ENCODE measurements at regions of chr2 and their contacts with region 1.

Region 1: GRCh38 chr2:74715078-74715791 is 61.2 kb downstream of the SEMA4F start:
- DNase-seq: peak; percentile 88
- ATAC-seq: peak; percentile 87
- H3K4me3 ChIP-seq: peak overlapping the region; percentile 30 to 69 (median 55)
- H3K4me3 Mint-ChIP-seq: peak overlapping the region; percentile 86
- H3K27ac ChIP-seq: no peak overlapping the region
- H3K27ac Mint-ChIP-seq: peak overlapping the region; percentile 3
- H3K4me1 ChIP-seq: peaks cover 4 to 6% of the 10 kb centered on the region in 2 donors
- H3K4me1 Mint-ChIP-seq: peaks cover 7% of the 10 kb centered on the region
- H3K27me3 ChIP-seq: peaks cover 0 to 20% (median 18%) of the 10 kb centered on the region in 4 experiments
- H3K27me3 Mint-ChIP-seq: peaks cover 14% of the 10 kb centered on the region
- CTCF ChIP-seq: peak; percentile 97

Region 2: DNA sequence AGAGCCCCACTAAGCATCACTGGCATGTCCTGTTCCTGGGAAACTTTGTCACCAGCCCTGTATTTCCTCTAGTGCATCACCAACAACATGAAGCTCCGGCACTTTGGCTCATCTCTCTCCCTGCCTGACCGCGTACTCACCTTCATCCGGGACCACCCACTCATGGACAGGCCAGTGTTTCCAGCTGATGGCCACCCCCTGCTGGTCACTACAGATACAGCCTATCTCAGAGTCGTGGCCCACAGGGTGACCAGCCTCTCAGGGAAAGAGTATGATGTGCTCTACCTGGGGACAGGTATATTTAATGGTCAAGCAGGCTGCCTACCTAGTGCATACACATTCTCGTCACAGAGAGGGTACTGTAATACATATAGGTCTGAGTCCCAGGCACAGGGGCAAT is 40.1 kb before region 1 on chr2:
- CTCF ChIA-PET with region 1: no interaction called
- POLR2A ChIA-PET with region 1: no interaction called
- intact Hi-C with region 1: no loop called
- DNase-seq: no peak
- ATAC-seq: no peak
- H3K4me3 ChIP-seq: no peak overlapping the region
- H3K4me3 Mint-ChIP-seq: no peak overlapping the region
- H3K27ac ChIP-seq: no peak overlapping the region
- H3K27ac Mint-ChIP-seq: no peak overlapping the region
- H3K4me1 ChIP-seq: no peaks in the 10 kb centered on the region
- H3K4me1 Mint-ChIP-seq: no peaks in the 10 kb centered on the region
- H3K27me3 ChIP-seq: no peaks in the 10 kb centered on the region
- H3K27me3 Mint-ChIP-seq: no peaks in the 10 kb centered on the region
- CTCF ChIP-seq: no peak

Region 3: DNA sequence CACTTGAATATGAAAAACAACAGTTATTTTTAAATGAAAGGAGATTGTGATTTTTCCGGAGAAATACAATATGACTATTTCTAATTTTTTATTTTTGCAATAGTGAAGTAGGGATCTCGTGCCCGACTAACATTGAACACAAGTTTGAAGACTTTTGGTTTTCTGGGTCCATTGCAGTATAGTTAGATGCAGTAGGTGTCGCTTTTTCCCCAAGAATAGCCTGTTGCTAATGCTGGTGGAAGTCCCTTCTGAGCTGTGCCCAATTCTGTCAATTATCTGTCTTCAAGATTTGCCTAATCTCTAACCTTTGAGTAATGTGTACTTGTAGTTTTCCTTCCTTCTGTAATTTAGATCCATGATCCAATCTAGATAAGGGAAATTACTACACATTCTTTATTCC is 24.7 kb before region 1 on chr2:
- CTCF ChIA-PET with region 1: interaction called, 9 read pairs
- POLR2A ChIA-PET with region 1: no interaction called
- intact Hi-C with region 1: loop called (anchors 1 kb)
- DNase-seq: peak; percentile 61
- ATAC-seq: peak; percentile 49
- H3K4me3 ChIP-seq: no peak overlapping the region
- H3K4me3 Mint-ChIP-seq: no peak overlapping the region
- H3K27ac ChIP-seq: no peak overlapping the region
- H3K27ac Mint-ChIP-seq: no peak overlapping the region
- H3K4me1 ChIP-seq: no peaks in the 10 kb centered on the region
- H3K4me1 Mint-ChIP-seq: no peaks in the 10 kb centered on the region
- H3K27me3 ChIP-seq: no peaks in the 10 kb centered on the region
- H3K27me3 Mint-ChIP-seq: peaks cover 12% of the 10 kb centered on the region
- CTCF ChIP-seq: peak; percentile 74

Region 4: DNA sequence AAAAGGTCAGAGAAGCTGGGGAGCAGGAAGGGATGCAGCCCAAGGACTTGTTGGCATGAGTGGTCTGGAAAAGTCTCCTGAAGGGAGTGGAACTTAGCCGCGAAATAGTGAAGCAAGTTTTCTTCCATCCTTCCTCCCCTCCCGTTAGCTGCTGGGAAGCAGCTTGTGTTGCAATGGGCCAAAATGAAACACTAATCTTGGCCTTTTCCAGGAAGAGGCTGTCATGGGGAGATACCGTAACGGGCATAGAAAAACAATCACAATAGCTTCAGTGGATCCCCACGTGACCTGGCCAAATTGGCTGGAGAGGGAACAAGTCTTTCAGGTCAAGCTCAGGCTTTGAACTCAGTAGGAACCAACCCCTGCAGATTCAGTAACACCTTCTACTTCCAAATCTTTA is 11.9 kb before region 1 on chr2:
- CTCF ChIA-PET with region 1: interaction called, 13 read pairs
- POLR2A ChIA-PET with region 1: no interaction called
- intact Hi-C with region 1: no loop called
- DNase-seq: no peak
- ATAC-seq: no peak
- H3K4me3 ChIP-seq: no peak overlapping the region
- H3K4me3 Mint-ChIP-seq: no peak overlapping the region
- H3K27ac ChIP-seq: no peak overlapping the region
- H3K27ac Mint-ChIP-seq: no peak overlapping the region
- H3K4me1 ChIP-seq: peaks cover 0 to 5% of the 10 kb centered on the region in 2 donors
- H3K4me1 Mint-ChIP-seq: peaks cover 8% of the 10 kb centered on the region
- H3K27me3 ChIP-seq: no peaks in the 10 kb centered on the region
- H3K27me3 Mint-ChIP-seq: peaks cover 15% of the 10 kb centered on the region
- CTCF ChIP-seq: no peak

Region 5: DNA sequence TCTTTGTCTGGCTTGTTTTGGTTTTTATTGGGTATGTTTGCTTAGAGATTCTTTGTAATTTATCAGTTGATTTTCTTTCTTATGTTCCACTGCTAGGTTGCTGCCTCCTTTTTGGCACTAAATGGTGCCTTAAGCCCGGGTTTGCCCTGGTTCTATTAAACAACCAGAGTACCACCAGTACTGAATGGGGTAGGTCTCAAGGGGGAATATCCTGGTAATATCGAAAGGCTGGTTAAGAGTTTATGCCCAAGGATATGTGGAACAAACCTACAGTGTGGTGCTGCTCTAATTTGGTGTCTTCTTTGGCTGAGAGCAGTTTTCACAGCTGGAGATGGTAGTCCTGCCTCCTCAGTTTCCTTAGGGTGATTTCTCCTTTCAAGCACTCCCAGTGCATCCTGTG is 15.3 kb after region 1 on chr2:
- CTCF ChIA-PET with region 1: interaction called, 10 read pairs
- POLR2A ChIA-PET with region 1: no interaction called
- intact Hi-C with region 1: no loop called
- DNase-seq: no peak
- ATAC-seq: no peak
- H3K4me3 ChIP-seq: no peak overlapping the region
- H3K4me3 Mint-ChIP-seq: no peak overlapping the region
- H3K27ac ChIP-seq: no peak overlapping the region
- H3K27ac Mint-ChIP-seq: no peak overlapping the region
- H3K4me1 ChIP-seq: no peaks in the 10 kb centered on the region
- H3K4me1 Mint-ChIP-seq: no peaks in the 10 kb centered on the region
- H3K27me3 ChIP-seq: peaks cover 0 to 12% (median 4%) of the 10 kb centered on the region in 4 experiments
- H3K27me3 Mint-ChIP-seq: peaks cover 49% of the 10 kb centered on the region
- CTCF ChIP-seq: no peak

Region 6: GRCh38 chr2:74849228-74849892 is 134.1 kb after region 1 on chr2:
- CTCF ChIA-PET with region 1: interaction called, 10 read pairs
- POLR2A ChIA-PET with region 1: no interaction called
- intact Hi-C with region 1: no loop called
- DNase-seq: peak; percentile 79
- ATAC-seq: peak; percentile 80
- H3K4me3 ChIP-seq: peak overlapping the region; percentile 33 to 65 (median 48)
- H3K4me3 Mint-ChIP-seq: peak overlapping the region; percentile 92
- H3K27ac ChIP-seq: peak overlapping the region; percentile 88 to 94
- H3K27ac Mint-ChIP-seq: peak overlapping the region; percentile 99
- H3K4me1 ChIP-seq: peaks cover 58 to 68% of the 10 kb centered on the region in 2 donors
- H3K4me1 Mint-ChIP-seq: peaks cover 69% of the 10 kb centered on the region
- H3K27me3 ChIP-seq: no peaks in the 10 kb centered on the region
- H3K27me3 Mint-ChIP-seq: no peaks in the 10 kb centered on the region
- CTCF ChIP-seq: no peak

Region 7: DNA sequence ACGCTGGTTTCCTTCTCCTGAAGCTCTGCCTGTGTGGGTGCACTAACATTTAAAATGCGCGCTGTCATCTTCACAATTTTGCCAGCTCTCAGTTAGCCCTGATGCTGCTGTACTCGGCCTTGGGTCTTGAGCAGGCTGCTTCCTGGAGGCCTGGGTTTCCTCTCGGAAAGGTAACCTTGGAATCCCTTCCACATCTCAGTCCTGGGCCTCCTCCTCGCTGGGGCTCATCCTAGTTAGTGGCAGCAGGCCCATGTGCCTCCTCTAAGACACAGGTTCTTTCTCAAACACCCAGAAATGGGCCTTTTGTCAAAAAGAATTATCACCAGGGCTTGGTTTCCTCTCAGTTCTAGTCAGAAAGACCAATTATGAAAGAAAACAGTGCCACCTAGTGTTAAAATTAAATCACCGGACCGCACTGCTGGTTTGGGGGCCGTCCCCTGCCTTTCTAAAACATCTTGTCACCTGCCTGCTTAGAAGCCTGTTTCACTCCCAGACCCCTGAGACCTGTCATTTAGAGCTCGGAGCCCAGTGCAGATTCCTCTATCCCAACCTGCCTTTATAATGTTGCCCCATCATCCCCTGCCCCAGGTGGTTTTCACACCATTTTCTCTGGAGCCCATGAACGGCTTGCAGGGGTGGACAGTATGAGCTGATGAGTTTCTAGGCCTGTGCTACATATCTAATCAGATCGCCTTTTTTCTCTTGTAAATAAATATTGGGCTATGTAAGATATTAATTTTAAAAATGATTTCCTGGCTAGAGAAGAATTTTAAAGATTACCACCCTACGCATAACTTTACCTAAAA is 161.0 kb after region 1 on chr2:
- CTCF ChIA-PET with region 1: interaction called, 269 read pairs
- POLR2A ChIA-PET with region 1: no interaction called
- intact Hi-C with region 1: loop called (anchors 1 kb)
- DNase-seq: peak; percentile 80
- ATAC-seq: peak; percentile 80
- H3K4me3 ChIP-seq: no peak overlapping the region
- H3K4me3 Mint-ChIP-seq: no peak overlapping the region
- H3K27ac ChIP-seq: no peak overlapping the region
- H3K27ac Mint-ChIP-seq: no peak overlapping the region
- H3K4me1 ChIP-seq: peaks cover 0 to 3% of the 10 kb centered on the region in 2 donors
- H3K4me1 Mint-ChIP-seq: no peaks in the 10 kb centered on the region
- H3K27me3 ChIP-seq: no peaks in the 10 kb centered on the region
- H3K27me3 Mint-ChIP-seq: no peaks in the 10 kb centered on the region
- CTCF ChIP-seq: peak; percentile 77

Region 8: GRCh38 chr2:74884118-74884762 is 169.0 kb after region 1 on chr2:
- CTCF ChIA-PET with region 1: interaction called, 269 read pairs
- POLR2A ChIA-PET with region 1: no interaction called
- intact Hi-C with region 1: no loop called
- DNase-seq: no peak
- ATAC-seq: no peak
- H3K4me3 ChIP-seq: no peak overlapping the region
- H3K4me3 Mint-ChIP-seq: no peak overlapping the region
- H3K27ac ChIP-seq: no peak overlapping the region
- H3K27ac Mint-ChIP-seq: no peak overlapping the region
- H3K4me1 ChIP-seq: no peaks in the 10 kb centered on the region
- H3K4me1 Mint-ChIP-seq: no peaks in the 10 kb centered on the region
- H3K27me3 ChIP-seq: no peaks in the 10 kb centered on the region
- H3K27me3 Mint-ChIP-seq: no peaks in the 10 kb centered on the region
- CTCF ChIP-seq: no peak